ENCODE measurements at regions of chr6 and their contacts with region 1.

Region 1: GRCh38 chr6:153023977-153024708 is 21.6 kb upstream of the MTRF1L start:
- DNase-seq: peak; percentile 51
- ATAC-seq: peak; percentile 99
- H3K4me3 ChIP-seq: no peak overlapping the region
- H3K27ac ChIP-seq: no peak overlapping the region
- H3K4me1 ChIP-seq: no peaks in the 10 kb centered on the region
- H3K27me3 ChIP-seq: no peaks in the 10 kb centered on the region
- CTCF ChIP-seq: peak; percentile 56 to 87 (median 73)
- POLR2A ChIP-seq: no peak
- RAD21 ChIP-seq: peak; percentile 80

Region 2: GRCh38 chr6:152750694-152751093 is 273.4 kb before region 1 on chr6 and contains the start of gene VIP:
- CTCF ChIA-PET with region 1: no interaction called
- POLR2A ChIA-PET with region 1: no interaction called
- RAD21 ChIA-PET with region 1: no interaction called
- intact Hi-C with region 1: loop called (anchors 5 kb)
- DNase-seq: no peak
- ATAC-seq: 0 out of 2 replicates have a peak, but pooled peaks have one; percentile 46
- H3K4me3 ChIP-seq: no peak within 1 kb of the TSS
- H3K27ac ChIP-seq: no peak within 1 kb of the TSS
- H3K4me1 ChIP-seq: no peaks in the 10 kb centered on the region; a peak in 1 of 4 replicates
- H3K27me3 ChIP-seq: peaks cover 41% of the 10 kb centered on the region
- CTCF ChIP-seq: no peak
- POLR2A ChIP-seq: no peak
- RAD21 ChIP-seq: no peak
- total RNA-seq, gene VIP: not detected

Region 3: DNA sequence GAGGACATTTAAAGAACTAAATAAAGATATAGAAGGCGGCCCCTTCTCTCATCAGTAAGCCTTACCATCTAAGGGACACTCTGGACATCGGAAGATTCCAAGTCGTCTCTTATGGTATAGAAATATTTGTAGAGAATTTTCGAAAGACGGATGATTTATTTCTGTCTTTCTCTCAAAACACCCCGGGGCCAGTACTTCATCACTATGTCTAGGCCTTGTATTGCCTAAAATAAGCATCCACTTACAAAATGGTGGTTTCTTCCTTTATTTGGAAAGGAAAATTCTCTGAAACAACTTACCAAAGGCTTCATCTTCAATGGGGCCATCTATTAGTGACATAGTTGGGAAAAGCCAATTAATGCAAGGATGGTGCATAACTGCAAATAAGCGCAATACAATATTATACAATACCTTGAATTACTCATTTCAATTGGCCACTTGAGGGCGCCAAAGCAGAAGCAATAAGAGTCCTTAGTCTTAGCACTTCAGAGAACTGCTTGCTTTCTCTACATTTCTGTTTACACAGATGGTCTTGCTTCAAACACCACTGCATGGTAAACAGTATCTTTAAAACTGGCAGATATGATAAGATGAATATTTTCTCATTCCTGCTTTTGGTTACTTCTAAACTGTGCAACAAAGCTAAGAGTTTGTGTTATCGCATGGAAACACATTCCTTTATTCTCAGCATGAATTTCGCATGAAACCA is 160.4 kb before region 1 on chr6:
- CTCF ChIA-PET with region 1: no interaction called
- POLR2A ChIA-PET with region 1: no interaction called
- RAD21 ChIA-PET with region 1: no interaction called
- intact Hi-C with region 1: loop called (anchors 1 kb)
- DNase-seq: peak; percentile 65
- ATAC-seq: peak; percentile 98
- H3K4me3 ChIP-seq: no peak overlapping the region
- H3K27ac ChIP-seq: no peak overlapping the region
- H3K4me1 ChIP-seq: no peaks in the 10 kb centered on the region
- H3K27me3 ChIP-seq: peaks cover 42% of the 10 kb centered on the region
- CTCF ChIP-seq: peak; percentile 53 to 75 (median 66)
- POLR2A ChIP-seq: no peak
- RAD21 ChIP-seq: peak; percentile 87

Region 4: GRCh38 chr6:152932865-152933264 is 91.3 kb before region 1 on chr6:
- CTCF ChIA-PET with region 1: no interaction called
- POLR2A ChIA-PET with region 1: no interaction called
- RAD21 ChIA-PET with region 1: no interaction called
- intact Hi-C with region 1: no loop called
- DNase-seq: no peak
- ATAC-seq: no peak
- H3K4me3 ChIP-seq: no peak overlapping the region
- H3K27ac ChIP-seq: no peak overlapping the region
- H3K4me1 ChIP-seq: no peaks in the 10 kb centered on the region
- H3K27me3 ChIP-seq: peaks cover 39% of the 10 kb centered on the region
- CTCF ChIP-seq: no peak
- POLR2A ChIP-seq: no peak
- RAD21 ChIP-seq: no peak

Region 5: GRCh38 chr6:152954443-152954842 is 69.7 kb before region 1 on chr6:
- CTCF ChIA-PET with region 1: interaction called, 7 read pairs
- POLR2A ChIA-PET with region 1: no interaction called
- RAD21 ChIA-PET with region 1: no interaction called
- intact Hi-C with region 1: loop called (anchors 1 kb)
- DNase-seq: no peak
- ATAC-seq: peak; percentile 60; the same call in 1 of the 2 replicates
- H3K4me3 ChIP-seq: no peak overlapping the region
- H3K27ac ChIP-seq: no peak overlapping the region
- H3K4me1 ChIP-seq: peaks cover 0 to 10% of the 10 kb centered on the region in 2 experiments; a peak in 2 of 4 replicates
- H3K27me3 ChIP-seq: peaks cover 5% of the 10 kb centered on the region; the same call in 1 of the 2 replicates
- CTCF ChIP-seq: peak; percentile 21 to 33 (median 29); a peak in 5 of 6 replicates
- POLR2A ChIP-seq: no peak
- RAD21 ChIP-seq: peak; percentile 46

Measured in HCT116 (cell line).